Keratinocyte (primary cell): ENCODE measurements at regions of chr2 and their contacts with region 1.

Region 1: GRCh38 chr2:11473659-11474433 is 7.9 kb upstream of the E2F6 start:
- DNase-seq: no peak
- H3K4me3 ChIP-seq: no peak overlapping the region
- H3K27ac ChIP-seq: no peak overlapping the region
- H3K4me1 ChIP-seq: no peaks in the 10 kb centered on the region
- H3K27me3 ChIP-seq: peaks cover 2% of the 10 kb centered on the region
- CTCF ChIP-seq: no peak

Region 2: DNA sequence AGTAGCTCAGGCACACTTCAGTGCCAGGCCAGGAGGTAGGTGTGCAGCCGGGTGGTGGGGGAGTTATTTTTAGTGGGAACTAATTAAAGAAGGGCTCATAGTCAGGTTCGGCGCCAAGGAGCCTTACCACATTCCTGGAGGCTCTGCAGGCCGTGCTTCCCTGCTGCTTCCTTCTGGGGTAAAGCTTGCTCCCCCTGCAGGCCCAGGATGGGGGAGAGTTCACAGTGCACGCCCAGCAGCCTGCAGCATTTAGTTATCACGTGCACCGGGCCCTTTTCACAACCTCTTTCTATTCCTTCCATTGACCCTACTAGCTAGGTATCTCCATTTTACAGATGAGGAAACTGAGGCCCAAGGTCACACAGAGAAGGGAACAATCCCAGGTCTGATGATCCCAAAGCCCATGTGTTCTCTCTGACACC is 559.6 kb before region 1 on chr2:
- dilution Hi-C with region 1: no loop called
- DNase-seq: no peak
- H3K4me3 ChIP-seq: no peak overlapping the region
- H3K27ac ChIP-seq: no peak overlapping the region
- H3K4me1 ChIP-seq: no peaks in the 10 kb centered on the region
- H3K27me3 ChIP-seq: peaks cover 52% of the 10 kb centered on the region
- CTCF ChIP-seq: peak; percentile 22 to 57 (median 32)

Region 3: GRCh38 chr2:11553661-11554398 is 80.0 kb after region 1 on chr2:
- dilution Hi-C with region 1: loop called (anchors 5 kb)
- DNase-seq: no peak
- H3K4me3 ChIP-seq: no peak overlapping the region
- H3K27ac ChIP-seq: no peak overlapping the region
- H3K4me1 ChIP-seq: no peaks in the 10 kb centered on the region
- H3K27me3 ChIP-seq: peaks cover 17% of the 10 kb centered on the region
- CTCF ChIP-seq: no peak